Mammary epithelial cell (primary cell): ENCODE measurements at regions of chr17 and their contacts with region 1.

Region 1: GRCh38 chr17:45317112-45317928 is 500 bp upstream of the MAP3K14 start:
- DNase-seq: peak; percentile 100
- H3K4me3 ChIP-seq: peak overlapping the region; percentile 27 to 50 (median 46)
- H3K27ac ChIP-seq: peak overlapping the region; percentile 92
- H3K4me1 ChIP-seq: peaks cover 78% of the 10 kb centered on the region
- H3K27me3 ChIP-seq: no peaks in the 10 kb centered on the region
- CTCF ChIP-seq: no peak

Region 2: DNA sequence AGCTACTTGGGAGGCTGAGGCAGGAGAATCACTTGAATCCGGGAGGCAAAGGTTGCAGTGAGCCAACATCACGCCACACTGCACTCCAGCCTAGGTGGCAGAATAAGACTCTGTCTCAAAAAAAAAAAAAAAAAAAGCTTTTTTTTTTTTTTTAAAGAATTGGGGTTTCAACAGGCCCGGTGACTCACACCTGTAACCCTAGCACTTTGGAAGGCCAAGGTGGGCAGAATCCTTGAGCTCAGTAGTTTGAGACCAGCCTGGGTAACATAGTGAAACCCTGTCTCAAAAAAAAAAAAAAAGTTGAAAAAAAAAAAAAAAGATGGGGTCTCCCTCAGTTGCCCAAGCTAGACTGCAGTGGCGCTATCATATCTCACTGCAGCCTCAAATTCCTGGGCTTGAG is 162.3 kb before region 1 on chr17:
- CTCF ChIA-PET with region 1: no interaction called
- dilution Hi-C with region 1: loop called (anchors 5 kb)
- in situ Hi-C with region 1: no loop called
- intact Hi-C with region 1: no loop called
- DNase-seq: no peak
- H3K4me3 ChIP-seq: no peak overlapping the region
- H3K27ac ChIP-seq: no peak overlapping the region
- H3K4me1 ChIP-seq: peaks cover 18% of the 10 kb centered on the region
- H3K27me3 ChIP-seq: no peaks in the 10 kb centered on the region
- CTCF ChIP-seq: no peak

Region 3: DNA sequence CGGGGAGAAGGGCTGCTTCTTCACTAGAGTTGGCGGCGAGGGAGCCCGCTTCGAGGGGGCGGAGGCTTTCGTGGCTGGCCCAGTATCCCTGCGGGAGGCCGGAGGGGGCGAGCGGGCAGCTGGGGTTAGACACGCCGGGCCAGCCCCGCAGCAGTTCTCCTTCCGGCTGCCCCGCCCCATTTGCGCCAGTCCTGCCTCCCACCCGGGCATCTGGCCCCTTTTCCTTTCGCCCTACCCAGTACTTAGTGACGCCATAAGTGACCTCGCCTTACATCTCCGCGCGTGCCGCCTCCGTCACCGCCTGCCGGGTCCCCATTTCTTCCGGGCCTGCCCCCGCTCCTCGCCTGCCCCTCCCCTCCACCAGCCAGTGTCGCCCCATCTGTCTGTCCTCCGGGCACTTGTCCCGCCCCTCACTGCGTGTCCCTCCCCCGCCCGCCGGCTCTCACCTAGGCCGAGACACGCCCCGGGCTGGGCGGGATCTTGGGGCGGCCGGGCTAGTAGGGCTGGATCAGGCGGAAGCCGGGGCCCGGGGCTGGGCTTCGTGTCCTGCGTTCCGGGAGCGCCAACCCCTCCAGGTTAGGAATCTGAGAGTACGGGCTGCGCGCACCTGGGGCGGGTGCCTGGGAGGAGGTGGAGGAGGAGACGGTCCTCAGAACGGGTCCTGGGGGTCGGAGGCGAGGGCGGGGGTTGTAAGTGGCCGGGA is 69.7 kb before region 1 on chr17:
- CTCF ChIA-PET with region 1: no interaction called
- dilution Hi-C with region 1: loop called (anchors 5 kb)
- in situ Hi-C with region 1: no loop called
- intact Hi-C with region 1: no loop called
- DNase-seq: peak; percentile 94
- H3K4me3 ChIP-seq: peak overlapping the region; percentile 67 to 84 (median 79)
- H3K27ac ChIP-seq: peak overlapping the region; percentile 31
- H3K4me1 ChIP-seq: peaks cover 16% of the 10 kb centered on the region
- H3K27me3 ChIP-seq: no peaks in the 10 kb centered on the region
- CTCF ChIP-seq: no peak

Region 4: GRCh38 chr17:45284176-45285140 is 32.9 kb before region 1 on chr17:
- CTCF ChIA-PET with region 1: interaction called, 5 read pairs
- dilution Hi-C with region 1: loop called (anchors 5 kb)
- in situ Hi-C with region 1: no loop called
- intact Hi-C with region 1: no loop called
- DNase-seq: peak; percentile 93
- H3K4me3 ChIP-seq: no peak overlapping the region
- H3K27ac ChIP-seq: peak overlapping the region; percentile 55
- H3K4me1 ChIP-seq: peaks cover 16% of the 10 kb centered on the region
- H3K27me3 ChIP-seq: no peaks in the 10 kb centered on the region
- CTCF ChIP-seq: peak; percentile 14 to 47

Region 5: GRCh38 chr17:45364531-45365390 is 47.4 kb after region 1 on chr17:
- CTCF ChIA-PET with region 1: no interaction called
- dilution Hi-C with region 1: loop called (anchors 5 kb)
- in situ Hi-C with region 1: no loop called
- intact Hi-C with region 1: no loop called
- DNase-seq: no peak
- H3K4me3 ChIP-seq: no peak overlapping the region
- H3K27ac ChIP-seq: no peak overlapping the region
- H3K4me1 ChIP-seq: no peaks in the 10 kb centered on the region
- H3K27me3 ChIP-seq: no peaks in the 10 kb centered on the region
- CTCF ChIP-seq: no peak

Region 6: GRCh38 chr17:45385331-45385997 is 68.1 kb after region 1 on chr17:
- CTCF ChIA-PET with region 1: no interaction called
- dilution Hi-C with region 1: no loop called
- in situ Hi-C with region 1: no loop called
- intact Hi-C with region 1: loop called (anchors 1 kb)
- DNase-seq: peak; percentile 70
- H3K4me3 ChIP-seq: no peak overlapping the region
- H3K27ac ChIP-seq: no peak overlapping the region
- H3K4me1 ChIP-seq: peaks cover 30% of the 10 kb centered on the region
- H3K27me3 ChIP-seq: no peaks in the 10 kb centered on the region
- CTCF ChIP-seq: peak; percentile 98 to 99

Region 7: DNA sequence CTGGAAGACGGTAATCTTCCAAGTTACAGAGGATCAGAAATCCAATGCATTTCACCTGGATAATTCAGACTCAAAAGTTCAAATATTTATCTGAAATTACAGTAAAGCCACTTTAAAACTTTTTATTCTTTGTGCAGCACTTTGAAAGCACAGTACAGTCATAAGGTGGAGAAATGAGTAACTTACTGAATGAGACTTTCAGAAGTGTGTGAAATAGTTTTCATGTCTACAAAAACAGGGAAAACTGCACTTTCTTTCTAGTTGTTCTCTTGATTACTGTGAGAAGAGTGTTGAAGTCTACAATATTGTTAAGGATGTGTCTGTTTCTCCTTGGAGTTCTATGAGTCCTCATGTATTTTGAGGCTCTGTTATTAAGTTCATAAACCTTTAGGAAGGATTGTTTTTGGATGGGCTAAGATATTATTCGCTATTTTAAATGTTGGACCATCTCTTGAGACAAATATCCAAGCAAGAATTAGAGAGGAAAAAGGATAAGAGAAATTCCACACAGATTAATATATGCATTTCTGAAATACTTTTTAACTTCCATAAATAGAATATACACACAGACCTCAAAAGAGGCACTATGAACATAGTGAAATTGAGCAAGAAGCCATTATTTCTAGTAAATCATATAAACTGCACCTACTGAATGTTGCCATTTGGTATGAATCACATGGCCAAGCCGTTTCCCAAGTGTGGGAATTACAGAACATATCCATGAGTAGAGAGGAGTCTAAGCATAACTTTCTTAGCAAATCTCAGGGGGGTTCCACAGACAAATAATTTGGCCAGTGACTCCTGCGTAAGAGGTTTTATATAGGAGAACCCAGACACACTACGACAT is 256.8 kb after region 1 on chr17:
- CTCF ChIA-PET with region 1: no interaction called
- dilution Hi-C with region 1: no loop called
- in situ Hi-C with region 1: no loop called
- intact Hi-C with region 1: no loop called
- DNase-seq: no peak
- H3K4me3 ChIP-seq: no peak overlapping the region
- H3K27ac ChIP-seq: no peak overlapping the region
- H3K4me1 ChIP-seq: peaks cover 14% of the 10 kb centered on the region
- H3K27me3 ChIP-seq: no peaks in the 10 kb centered on the region
- CTCF ChIP-seq: no peak